Transverse colon (tissue), 4 donors: ENCODE measurements at regions of chr22 and their contacts with region 1.

Region 1: DNA sequence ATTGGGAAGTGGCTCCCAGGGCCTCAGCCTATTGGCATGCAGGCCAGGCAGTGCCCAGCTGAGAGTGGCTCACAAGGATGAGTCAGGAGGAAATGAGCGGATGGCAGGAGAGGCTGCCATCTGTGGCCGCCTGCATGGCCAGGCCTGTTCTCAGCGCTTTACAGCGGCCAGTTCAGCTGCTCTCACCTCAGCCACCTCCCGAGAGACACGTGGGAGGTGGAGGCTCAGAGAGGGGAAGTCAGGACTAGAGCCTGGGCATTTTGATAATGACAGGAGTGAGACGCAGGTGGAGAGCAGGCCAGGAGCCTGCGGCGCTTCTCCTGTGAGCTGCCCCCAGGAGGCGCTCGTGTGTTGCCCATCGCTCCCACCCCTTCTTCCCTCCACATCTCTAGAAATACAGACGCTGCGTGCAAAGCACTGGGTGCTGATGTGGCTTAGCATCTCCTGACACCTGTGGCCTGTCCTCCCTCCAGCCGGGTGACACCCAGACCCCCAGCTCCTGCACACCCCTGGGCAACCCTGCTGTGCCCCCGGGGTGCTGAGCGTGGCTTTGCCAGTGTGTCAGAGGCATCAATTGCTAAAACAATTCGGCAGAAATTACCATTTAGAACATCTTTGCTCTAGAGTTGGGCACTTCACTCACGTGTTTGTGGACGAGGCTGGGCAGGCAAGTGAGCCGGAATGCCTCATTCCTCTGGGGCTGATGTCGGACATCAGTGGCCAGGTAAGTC is 21.4 kb upstream of the PANX2 start:
- DNase-seq: peak; percentile 73
- H3K4me3 ChIP-seq: no peak overlapping the region
- H3K27ac ChIP-seq: no peak overlapping the region
- H3K4me1 ChIP-seq: no peaks in the 10 kb centered on the region
- H3K27me3 ChIP-seq: peaks cover 9% of the 10 kb centered on the region
- CTCF ChIP-seq: peak; percentile 61 to 81 (median 78)
- EP300 ChIP-seq: no peak
- POLR2A ChIP-seq: no peak

Region 2: GRCh38 chr22:50200461-50201190 is 51.5 kb after region 1 on chr22 and contains the start of gene SELENOO:
- in situ Hi-C with region 1: loop called in 1 of 4 experiments (anchors 10 kb)
- intact Hi-C with region 1: no loop called
- DNase-seq: peak; percentile 95
- H3K4me3 ChIP-seq: peak within 1 kb of the TSS; percentile 62 to 95 (median 88)
- H3K27ac ChIP-seq: peak within 1 kb of the TSS; percentile 81 to 88 (median 86)
- H3K4me1 ChIP-seq: peaks cover 16 to 22% (median 19%) of the 10 kb centered on the region in 4 donors
- H3K27me3 ChIP-seq: no peaks in the 10 kb centered on the region
- CTCF ChIP-seq: no peak
- EP300 ChIP-seq: no peak
- POLR2A ChIP-seq: peak; percentile 69
- total RNA-seq, gene SELENOO: 27.3 to 91.3 (median 35.1) TPM

Region 3: DNA sequence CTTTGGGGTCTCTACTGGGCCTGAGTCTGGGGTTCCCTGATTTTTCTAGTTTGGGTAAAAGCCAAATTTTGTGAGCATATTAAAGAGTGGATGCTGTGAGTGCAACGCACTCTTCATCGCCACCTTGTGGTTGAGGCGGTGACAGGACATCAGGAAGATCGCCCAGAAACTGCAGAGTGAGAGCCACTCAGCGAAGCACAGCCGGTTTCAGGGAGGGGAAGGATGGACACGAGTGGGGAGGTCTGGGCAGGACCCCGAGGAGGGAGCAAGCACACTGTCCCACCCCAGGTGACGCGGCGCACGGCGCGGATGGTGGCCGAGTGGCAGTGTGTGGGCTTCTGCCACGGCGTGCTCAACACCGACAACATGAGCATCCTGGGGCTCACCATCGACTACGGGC is 60.7 kb after region 1 on chr22:
- in situ Hi-C with region 1: loop called in 2 of 4 experiments (anchors 10 kb)
- intact Hi-C with region 1: loop called (anchors 5 kb)
- DNase-seq: peak; percentile 68
- H3K4me3 ChIP-seq: no peak overlapping the region
- H3K27ac ChIP-seq: no peak overlapping the region
- H3K4me1 ChIP-seq: peaks cover 0 to 7% (median 1%) of the 10 kb centered on the region in 4 donors
- H3K27me3 ChIP-seq: no peaks in the 10 kb centered on the region
- CTCF ChIP-seq: peak; percentile 84 to 90 (median 87)
- EP300 ChIP-seq: no peak
- POLR2A ChIP-seq: no peak

Region 4: GRCh38 chr22:50244420-50245213 is 95.5 kb after region 1 on chr22 and contains the start of gene TUBGCP6:
- in situ Hi-C with region 1: no loop called
- intact Hi-C with region 1: no loop called
- DNase-seq: peak; percentile 96
- H3K4me3 ChIP-seq: peak within 1 kb of the TSS; percentile 66 to 92 (median 89)
- H3K27ac ChIP-seq: peak within 1 kb of the TSS; percentile 93 to 95 (median 94)
- H3K4me1 ChIP-seq: peaks cover 35 to 60% (median 45%) of the 10 kb centered on the region in 4 donors
- H3K27me3 ChIP-seq: no peaks in the 10 kb centered on the region
- CTCF ChIP-seq: peak in 4 of 5 experiments; percentile 30 to 75 (median 49)
- EP300 ChIP-seq: no peak
- POLR2A ChIP-seq: peak; percentile 89
- total RNA-seq, gene TUBGCP6: 43.8 to 110 (median 73.1) TPM